ENCODE measurements at regions of chr1 and their contacts with region 1.

Region 1: GRCh38 chr1:175208773-175209492 is 16.4 kb upstream of the KIAA0040 start:
- DNase-seq: peak; percentile 28 to 90 (median 44)
- ATAC-seq: peak; percentile 92
- H3K4me3 ChIP-seq: peak overlapping the region; percentile 25
- H3K4me3 Mint-ChIP-seq: peak overlapping the region; percentile 86
- H3K27ac ChIP-seq: peak overlapping the region; percentile 37 to 56
- H3K27ac Mint-ChIP-seq: peak overlapping the region; percentile 86
- H3K4me1 ChIP-seq: peaks cover 37% of the 10 kb centered on the region
- H3K4me1 Mint-ChIP-seq: peaks cover 86% of the 10 kb centered on the region
- H3K27me3 ChIP-seq: no peaks in the 10 kb centered on the region
- H3K27me3 Mint-ChIP-seq: no peaks in the 10 kb centered on the region
- CTCF ChIP-seq: no peak

Region 2: DNA sequence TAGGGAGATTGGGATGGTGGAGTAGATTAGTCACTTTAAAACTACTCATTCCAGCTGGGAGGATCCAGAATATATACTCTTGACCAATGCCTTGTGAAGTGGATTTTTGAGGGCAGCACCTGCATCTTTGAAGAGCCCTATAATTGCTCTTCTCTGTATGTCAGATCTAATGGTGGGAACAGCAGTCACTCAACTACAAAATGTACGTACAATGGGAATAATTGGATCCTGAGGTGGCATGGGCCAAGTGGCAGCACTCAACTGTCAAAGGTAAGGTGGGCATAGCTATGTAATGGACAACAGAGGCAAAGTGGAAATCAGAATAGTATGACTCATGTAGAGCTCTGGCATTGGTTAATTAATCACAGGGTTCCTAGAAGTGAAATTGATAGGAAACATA is 35.3 kb after region 1 on chr1:
- CTCF ChIA-PET with region 1: no interaction called
- POLR2A ChIA-PET with region 1: no interaction called
- intact Hi-C with region 1: loop called in 1 of 2 experiments (anchors 5 kb)
- DNase-seq: no peak
- ATAC-seq: no peak
- H3K4me3 ChIP-seq: no peak overlapping the region
- H3K4me3 Mint-ChIP-seq: no peak overlapping the region
- H3K27ac ChIP-seq: no peak overlapping the region
- H3K27ac Mint-ChIP-seq: no peak overlapping the region
- H3K4me1 ChIP-seq: no peaks in the 10 kb centered on the region
- H3K4me1 Mint-ChIP-seq: no peaks in the 10 kb centered on the region
- H3K27me3 ChIP-seq: no peaks in the 10 kb centered on the region
- H3K27me3 Mint-ChIP-seq: no peaks in the 10 kb centered on the region
- CTCF ChIP-seq: no peak

Region 3: DNA sequence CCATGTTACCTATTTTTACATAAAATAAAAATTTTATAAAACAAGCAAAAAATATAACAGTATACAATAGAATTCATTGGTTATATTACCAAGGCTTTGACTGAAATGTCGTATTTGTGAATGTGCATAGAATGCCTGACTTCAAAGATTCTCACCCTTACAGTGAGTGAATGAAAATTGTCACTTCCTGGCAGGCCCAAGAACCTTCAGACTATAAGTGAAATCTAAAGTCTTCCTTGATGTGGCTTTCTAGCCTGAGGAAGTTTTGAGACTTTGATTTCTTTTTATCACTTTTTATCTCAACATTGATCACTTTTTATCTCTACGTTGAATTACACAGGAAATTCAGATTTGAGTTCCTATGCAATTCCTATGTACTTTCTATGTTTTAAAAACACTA is 88.4 kb after region 1 on chr1:
- CTCF ChIA-PET with region 1: no interaction called
- POLR2A ChIA-PET with region 1: no interaction called
- intact Hi-C with region 1: loop called in 1 of 2 experiments (anchors 5 kb)
- DNase-seq: peak in 3 of 14 experiments; percentile 43 to 60 (median 51)
- ATAC-seq: peak; percentile 95
- H3K4me3 ChIP-seq: no peak overlapping the region
- H3K4me3 Mint-ChIP-seq: peak overlapping the region; percentile 54
- H3K27ac ChIP-seq: no peak overlapping the region
- H3K27ac Mint-ChIP-seq: no peak overlapping the region
- H3K4me1 ChIP-seq: peaks cover 9% of the 10 kb centered on the region
- H3K4me1 Mint-ChIP-seq: peaks cover 48% of the 10 kb centered on the region
- H3K27me3 ChIP-seq: peaks cover 0 to 3% of the 10 kb centered on the region in 2 experiments
- H3K27me3 Mint-ChIP-seq: peaks cover 5% of the 10 kb centered on the region
- CTCF ChIP-seq: no peak

Region 4: GRCh38 chr1:175338387-175339135 is 129.6 kb after region 1 on chr1:
- CTCF ChIA-PET with region 1: no interaction called
- POLR2A ChIA-PET with region 1: no interaction called
- intact Hi-C with region 1: no loop called
- DNase-seq: peak; percentile 35 to 71 (median 49)
- ATAC-seq: peak; percentile 97
- H3K4me3 ChIP-seq: no peak overlapping the region
- H3K4me3 Mint-ChIP-seq: no peak overlapping the region
- H3K27ac ChIP-seq: no peak overlapping the region
- H3K27ac Mint-ChIP-seq: no peak overlapping the region
- H3K4me1 ChIP-seq: peaks cover 4% of the 10 kb centered on the region
- H3K4me1 Mint-ChIP-seq: no peaks in the 10 kb centered on the region
- H3K27me3 ChIP-seq: peaks cover 2 to 12% of the 10 kb centered on the region in 2 experiments
- H3K27me3 Mint-ChIP-seq: peaks cover 15% of the 10 kb centered on the region
- CTCF ChIP-seq: peak; percentile 60

Measured in CD4-positive, alpha-beta T cell (primary cell).